AG04450 (cell line): ENCODE measurements at regions of chr3 and their contacts with region 1.

Region 1: GRCh38 chr3:39990532-39990931 is 181.1 kb downstream of the MYRIP start:
- DNase-seq: no peak
- H3K4me3 ChIP-seq: no peak overlapping the region
- H3K27ac ChIP-seq: no peak overlapping the region
- H3K27me3 ChIP-seq: no peaks in the 10 kb centered on the region
- CTCF ChIP-seq: peak; percentile 33

Region 2: GRCh38 chr3:39541917-39542329 is 448.6 kb before region 1 on chr3:
- CTCF ChIA-PET with region 1: interaction called, 16 read pairs
- POLR2A ChIA-PET with region 1: no interaction called
- DNase-seq: no peak
- H3K4me3 ChIP-seq: no peak overlapping the region
- H3K27ac ChIP-seq: no peak overlapping the region
- H3K27me3 ChIP-seq: no peaks in the 10 kb centered on the region
- CTCF ChIP-seq: peak; percentile 61